H1 (cell line): ENCODE measurements at regions of chr4 and their contacts with region 1.

Region 1: DNA sequence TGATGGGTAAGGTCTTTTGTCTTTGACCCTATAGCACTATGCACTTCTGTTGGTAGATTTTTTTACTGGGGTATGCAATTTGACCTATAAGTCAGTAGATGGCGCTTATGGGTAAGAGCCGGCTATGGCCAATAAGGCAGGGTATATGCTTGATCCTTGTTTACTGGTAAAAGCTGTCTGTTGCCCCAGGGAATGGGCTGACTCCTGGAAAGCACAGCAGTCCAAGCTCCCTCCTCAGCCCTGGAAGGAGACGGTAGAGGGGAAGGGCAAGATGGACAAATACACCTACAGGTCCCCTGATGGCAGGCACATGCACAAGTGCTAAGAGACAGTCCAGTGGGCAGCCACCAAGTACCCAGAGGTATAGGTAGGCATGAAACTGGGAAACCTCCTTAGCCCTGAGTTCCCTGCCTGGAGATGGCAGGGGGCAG is 63.7 kb downstream of the ADAMTS3 start:
- DNase-seq: peak in 1 of 2 experiments; percentile 53
- H3K4me3 ChIP-seq: no peak overlapping the region
- H3K27ac ChIP-seq: no peak overlapping the region
- H3K4me1 ChIP-seq: peaks cover 0 to 2% (median under 1%) of the 10 kb centered on the region in 4 experiments; a peak in 2 of 7 replicates
- H3K27me3 ChIP-seq: no peaks in the 10 kb centered on the region
- CTCF ChIP-seq: peak in 2 of 3 experiments; percentile 74 to 76; a peak in 3 of 4 replicates
- EP300 ChIP-seq: 0 out of 3 replicates have a peak, but pooled peaks of 1 of the 2 experiments have one; percentile 40
- POLR2A ChIP-seq: no peak
- RAD21 ChIP-seq: peak; percentile 85 to 86

Region 2: DNA sequence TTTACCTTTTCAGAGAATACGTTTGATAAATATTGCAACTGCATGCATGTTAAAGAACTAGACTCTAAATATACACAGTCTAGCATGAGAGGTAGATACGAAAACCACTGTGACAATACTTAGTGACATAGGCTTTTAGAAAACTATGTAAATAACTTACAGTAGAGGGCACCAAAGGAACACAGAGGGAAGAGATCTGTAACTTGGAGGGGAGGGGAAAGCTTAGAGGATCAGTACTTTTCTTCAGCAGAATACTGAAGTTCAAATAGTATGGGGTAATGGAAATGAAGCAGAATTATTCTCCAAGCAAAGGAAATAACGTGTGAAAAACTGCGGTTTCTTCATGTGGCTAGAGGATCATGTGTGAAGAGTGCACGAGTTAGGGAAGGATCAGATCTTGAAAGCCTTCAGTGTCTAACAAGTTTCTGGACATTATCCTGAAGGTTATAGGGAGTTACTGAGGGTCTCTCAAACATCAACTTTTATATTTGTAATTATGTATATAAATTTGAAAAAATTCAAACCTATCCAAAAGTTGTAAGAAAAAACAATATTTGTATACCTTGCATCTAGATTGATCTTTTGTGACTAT is 209.3 kb before region 1 on chr4:
- CTCF ChIA-PET with region 1: no interaction called
- POLR2A ChIA-PET with region 1: no interaction called
- DNase-seq: no peak
- H3K4me3 ChIP-seq: no peak overlapping the region
- H3K27ac ChIP-seq: no peak overlapping the region
- H3K4me1 ChIP-seq: no peaks in the 10 kb centered on the region
- H3K27me3 ChIP-seq: peaks cover 0 to 2% (median 0%) of the 10 kb centered on the region in 4 experiments; a peak in 1 of 7 replicates
- CTCF ChIP-seq: peak in 2 of 3 experiments; percentile 37 to 56; a peak in 2 of 4 replicates
- EP300 ChIP-seq: no peak
- POLR2A ChIP-seq: no peak
- RAD21 ChIP-seq: peak; percentile 73 to 74

Region 3: DNA sequence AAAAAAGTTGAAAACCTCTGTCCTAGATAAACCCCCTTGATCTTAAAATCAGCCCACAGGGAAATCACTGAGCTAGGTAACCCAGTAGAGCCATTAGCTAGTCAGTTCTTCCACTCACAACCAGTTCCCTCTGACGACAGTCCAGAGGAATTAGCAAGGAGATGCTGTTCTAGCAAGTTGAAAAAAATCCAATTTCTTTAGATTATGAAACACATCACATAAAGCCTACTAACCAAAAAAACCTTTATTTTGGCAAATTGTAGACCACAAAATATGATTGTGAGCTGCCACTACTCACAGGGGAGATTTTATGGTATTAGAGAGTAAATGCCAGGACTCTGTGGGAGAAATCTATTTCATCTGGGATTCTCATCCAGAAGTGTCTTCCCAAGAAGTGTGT is 41.1 kb after region 1 on chr4:
- CTCF ChIA-PET with region 1: interaction called, 14 read pairs
- POLR2A ChIA-PET with region 1: no interaction called
- DNase-seq: no peak
- H3K4me3 ChIP-seq: no peak overlapping the region
- H3K27ac ChIP-seq: no peak overlapping the region
- H3K4me1 ChIP-seq: no peaks in the 10 kb centered on the region
- H3K27me3 ChIP-seq: no peaks in the 10 kb centered on the region
- CTCF ChIP-seq: no peak
- EP300 ChIP-seq: no peak
- POLR2A ChIP-seq: no peak
- RAD21 ChIP-seq: no peak

Region 4: DNA sequence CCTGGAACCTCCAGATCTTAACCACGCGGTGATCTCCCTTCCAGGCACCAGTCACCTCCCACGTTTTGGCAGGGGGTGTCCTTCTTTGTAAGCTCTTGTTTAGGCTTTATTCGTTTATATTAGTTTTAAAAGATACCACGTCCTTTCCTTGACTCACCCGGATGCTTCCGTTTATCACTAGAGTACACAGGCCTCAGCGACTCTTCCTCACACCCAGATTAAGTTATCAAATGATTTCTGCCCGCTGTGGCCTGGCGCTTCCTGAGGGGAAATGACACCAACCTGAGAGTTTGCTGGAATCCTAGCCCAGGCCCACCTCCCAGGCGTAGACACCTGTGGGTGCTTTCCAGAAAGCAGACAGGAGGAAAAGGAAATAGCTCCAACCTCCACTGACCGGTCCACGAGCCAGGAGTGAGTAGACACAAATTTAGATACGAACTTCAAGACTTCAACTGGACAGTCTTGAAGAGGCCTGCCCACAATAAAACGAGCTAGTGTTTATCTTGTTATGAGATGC is 64.4 kb after region 1 on chr4:
- CTCF ChIA-PET with region 1: interaction called, 10 read pairs
- POLR2A ChIA-PET with region 1: interaction called, 3 read pairs
- DNase-seq: no peak
- H3K4me3 ChIP-seq: peak overlapping the region; percentile 47 to 77 (median 66)
- H3K27ac ChIP-seq: no peak overlapping the region
- H3K4me1 ChIP-seq: peaks cover 2 to 14% (median 6%) of the 10 kb centered on the region in 4 experiments; a peak in 6 of 7 replicates
- H3K27me3 ChIP-seq: no peaks in the 10 kb centered on the region
- CTCF ChIP-seq: no peak
- EP300 ChIP-seq: no peak
- POLR2A ChIP-seq: no peak
- RAD21 ChIP-seq: no peak